Activated CD4-positive, alpha-beta T cell treated with anti-CD3 and anti-CD28 coated beads for 36 hours (primary cell): ENCODE measurements at regions of chr2 and their contacts with region 1.

Region 1: DNA sequence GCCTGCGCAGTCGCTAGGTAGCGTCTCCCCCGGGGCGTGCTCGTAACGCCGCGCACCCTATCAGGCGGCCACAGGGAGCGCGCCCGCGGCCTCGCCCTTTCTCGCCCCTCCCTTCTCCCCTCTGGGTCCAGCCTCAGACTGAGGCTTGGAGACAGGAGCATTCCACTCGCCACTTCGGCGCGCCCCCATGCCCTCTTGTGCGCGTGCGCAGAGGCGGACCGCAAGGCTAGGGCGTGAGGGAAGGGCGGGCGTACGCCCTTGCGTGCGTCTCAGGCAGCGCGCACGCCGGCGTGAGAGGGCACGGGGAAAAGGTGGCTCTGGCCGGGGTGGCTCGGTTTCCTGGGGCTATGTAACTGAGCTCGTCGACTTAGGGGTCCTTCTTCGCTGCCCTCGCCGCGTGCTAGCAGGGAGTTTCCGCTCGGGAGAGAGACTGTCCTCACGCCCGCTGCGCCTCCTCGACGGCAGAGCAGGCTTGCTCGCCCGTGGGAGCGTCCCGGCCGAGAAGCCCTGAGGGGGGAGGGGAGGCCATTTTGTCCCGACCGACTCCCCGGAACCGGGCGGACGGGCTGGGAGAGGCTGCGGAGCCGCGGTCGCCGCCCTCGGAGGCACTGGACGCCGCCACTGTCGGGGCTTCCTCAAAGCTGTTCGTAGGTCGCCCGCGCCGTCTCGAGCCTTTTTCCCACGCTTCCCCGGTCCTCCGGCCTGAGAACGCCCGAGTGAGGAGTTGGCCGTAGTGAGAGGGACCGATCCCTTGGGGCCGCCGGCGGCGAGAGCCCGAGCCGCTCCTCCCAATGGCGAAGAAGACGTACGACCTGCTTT is at the start of gene RAB10:
- DNase-seq: peak; percentile 99
- ATAC-seq: peak; percentile 95
- H3K4me3 Mint-ChIP-seq: peak within 1 kb of the TSS; percentile 98
- H3K27ac Mint-ChIP-seq: peak within 1 kb of the TSS; percentile 90
- H3K4me1 Mint-ChIP-seq: peaks cover 28% of the 10 kb centered on the region
- H3K27me3 Mint-ChIP-seq: no peaks in the 10 kb centered on the region
- total RNA-seq, gene RAB10: 103 to 160 TPM

Region 2: GRCh38 chr2:25673300-25674076 is 360.5 kb before region 1 on chr2 and contains the start of gene DTNB:
- CTCF ChIA-PET with region 1: no interaction called
- POLR2A ChIA-PET with region 1: interaction called, 4 read pairs
- intact Hi-C with region 1: loop called in 1 of 2 experiments (anchors 1 kb)
- DNase-seq: peak; percentile 86
- ATAC-seq: peak; percentile 74
- H3K4me3 Mint-ChIP-seq: peak within 1 kb of the TSS; percentile 79
- H3K27ac Mint-ChIP-seq: peak within 1 kb of the TSS; percentile 76
- H3K4me1 Mint-ChIP-seq: peaks cover 31% of the 10 kb centered on the region
- H3K27me3 Mint-ChIP-seq: peaks cover 11% of the 10 kb centered on the region
- total RNA-seq, gene DTNB: 17.1 to 33.5 TPM

Region 3: GRCh38 chr2:25960920-25961319 is 73.1 kb before region 1 on chr2:
- CTCF ChIA-PET with region 1: no interaction called
- POLR2A ChIA-PET with region 1: no interaction called
- intact Hi-C with region 1: no loop called
- DNase-seq: no peak
- ATAC-seq: peak; percentile 30
- H3K4me3 Mint-ChIP-seq: no peak overlapping the region
- H3K27ac Mint-ChIP-seq: peak overlapping the region; percentile 10
- H3K4me1 Mint-ChIP-seq: peaks cover 12% of the 10 kb centered on the region
- H3K27me3 Mint-ChIP-seq: no peaks in the 10 kb centered on the region

Region 4: DNA sequence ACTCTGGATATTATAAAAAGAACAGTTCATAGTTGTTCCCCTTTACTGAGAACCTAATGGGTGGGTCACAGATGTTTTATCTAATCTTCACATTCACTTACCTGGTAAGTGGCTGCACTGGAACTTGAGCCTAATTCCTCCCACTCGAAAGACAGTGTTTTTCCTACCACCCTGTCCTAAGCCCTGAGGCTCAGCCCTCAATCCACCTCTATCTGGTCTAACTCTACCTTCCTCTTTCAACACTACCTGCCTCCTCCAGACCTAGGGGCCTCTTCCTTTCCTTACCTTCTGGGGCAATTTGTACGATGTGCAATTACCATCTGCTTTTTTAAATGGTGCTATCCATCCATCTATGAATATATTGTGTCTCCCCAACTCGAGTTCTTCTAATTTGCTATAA is 42.1 kb before region 1 on chr2:
- CTCF ChIA-PET with region 1: no interaction called
- POLR2A ChIA-PET with region 1: interaction called, 5 read pairs
- intact Hi-C with region 1: loop called in 1 of 2 experiments (anchors 1 kb)
- DNase-seq: no peak
- ATAC-seq: peak; percentile 33
- H3K4me3 Mint-ChIP-seq: no peak overlapping the region
- H3K27ac Mint-ChIP-seq: no peak overlapping the region
- H3K4me1 Mint-ChIP-seq: peaks cover 8% of the 10 kb centered on the region
- H3K27me3 Mint-ChIP-seq: no peaks in the 10 kb centered on the region

Region 5: GRCh38 chr2:26068602-26069298 is 34.7 kb after region 1 on chr2:
- CTCF ChIA-PET with region 1: interaction called, 7 read pairs
- POLR2A ChIA-PET with region 1: interaction called, 7 read pairs
- intact Hi-C with region 1: loop called (anchors 1 kb)
- DNase-seq: peak; percentile 73
- ATAC-seq: peak; percentile 96
- H3K4me3 Mint-ChIP-seq: peak overlapping the region; percentile 41
- H3K27ac Mint-ChIP-seq: peak overlapping the region; percentile 89
- H3K4me1 Mint-ChIP-seq: peaks cover 58% of the 10 kb centered on the region
- H3K27me3 Mint-ChIP-seq: no peaks in the 10 kb centered on the region

Region 6: GRCh38 chr2:26184555-26185303 is 150.7 kb after region 1 on chr2:
- CTCF ChIA-PET with region 1: no interaction called
- POLR2A ChIA-PET with region 1: interaction called, 3 read pairs
- intact Hi-C with region 1: loop called in 1 of 2 experiments (anchors 1 kb)
- DNase-seq: peak; percentile 92
- ATAC-seq: peak; percentile 97
- H3K4me3 Mint-ChIP-seq: peak overlapping the region; percentile 75
- H3K27ac Mint-ChIP-seq: peak overlapping the region; percentile 60
- H3K4me1 Mint-ChIP-seq: peaks cover 16% of the 10 kb centered on the region
- H3K27me3 Mint-ChIP-seq: peaks cover 15% of the 10 kb centered on the region

Region 7: GRCh38 chr2:26764078-26764887 is 730.3 kb after region 1 on chr2 and contains the start of gene SLC35F6:
- CTCF ChIA-PET with region 1: no interaction called
- POLR2A ChIA-PET with region 1: no interaction called
- intact Hi-C with region 1: loop called in 1 of 2 experiments (anchors 5 kb)
- DNase-seq: peak; percentile 91
- ATAC-seq: peak; percentile 95
- H3K4me3 Mint-ChIP-seq: peak within 1 kb of the TSS; percentile 85
- H3K27ac Mint-ChIP-seq: peak within 1 kb of the TSS; percentile 78
- H3K4me1 Mint-ChIP-seq: peaks cover 36% of the 10 kb centered on the region
- H3K27me3 Mint-ChIP-seq: no peaks in the 10 kb centered on the region
- total RNA-seq, gene SLC35F6: 5.0 to 5.6 TPM